ENCODE measurements at regions of chr13 and their contacts with region 1.

Region 1: GRCh38 chr13:40666045-40666904 is at the start of gene FOXO1:
- DNase-seq: peak; percentile 81 to 95 (median 90)
- ATAC-seq: peak; percentile 76
- H3K4me3 ChIP-seq: peak within 1 kb of the TSS; percentile 98
- H3K4me3 Mint-ChIP-seq: peak within 1 kb of the TSS; percentile 96
- H3K27ac ChIP-seq: peak within 1 kb of the TSS; percentile 56 to 91
- H3K27ac Mint-ChIP-seq: peak within 1 kb of the TSS; percentile 95
- H3K4me1 ChIP-seq: peaks cover 23% of the 10 kb centered on the region
- H3K4me1 Mint-ChIP-seq: peaks cover 37% of the 10 kb centered on the region
- H3K27me3 ChIP-seq: no peaks in the 10 kb centered on the region
- H3K27me3 Mint-ChIP-seq: no peaks in the 10 kb centered on the region
- CTCF ChIP-seq: no peak
- total RNA-seq, gene FOXO1: 93.1 to 101 TPM

Region 2: GRCh38 chr13:40206241-40207000 is 459.9 kb before region 1 on chr13:
- CTCF ChIA-PET with region 1: no interaction called
- POLR2A ChIA-PET with region 1: interaction called, 28 read pairs
- intact Hi-C with region 1: loop called in 1 of 2 experiments (anchors 10 kb)
- DNase-seq: peak in 12 of 14 experiments; percentile 35 to 80 (median 54)
- ATAC-seq: peak; percentile 92
- H3K4me3 ChIP-seq: peak overlapping the region; percentile 10
- H3K4me3 Mint-ChIP-seq: peak overlapping the region; percentile 79
- H3K27ac ChIP-seq: peak overlapping the region; percentile 68 to 77
- H3K27ac Mint-ChIP-seq: peak overlapping the region; percentile 97
- H3K4me1 ChIP-seq: peaks cover 56% of the 10 kb centered on the region
- H3K4me1 Mint-ChIP-seq: peaks cover 80% of the 10 kb centered on the region
- H3K27me3 ChIP-seq: no peaks in the 10 kb centered on the region
- H3K27me3 Mint-ChIP-seq: no peaks in the 10 kb centered on the region
- CTCF ChIP-seq: no peak

Region 3: DNA sequence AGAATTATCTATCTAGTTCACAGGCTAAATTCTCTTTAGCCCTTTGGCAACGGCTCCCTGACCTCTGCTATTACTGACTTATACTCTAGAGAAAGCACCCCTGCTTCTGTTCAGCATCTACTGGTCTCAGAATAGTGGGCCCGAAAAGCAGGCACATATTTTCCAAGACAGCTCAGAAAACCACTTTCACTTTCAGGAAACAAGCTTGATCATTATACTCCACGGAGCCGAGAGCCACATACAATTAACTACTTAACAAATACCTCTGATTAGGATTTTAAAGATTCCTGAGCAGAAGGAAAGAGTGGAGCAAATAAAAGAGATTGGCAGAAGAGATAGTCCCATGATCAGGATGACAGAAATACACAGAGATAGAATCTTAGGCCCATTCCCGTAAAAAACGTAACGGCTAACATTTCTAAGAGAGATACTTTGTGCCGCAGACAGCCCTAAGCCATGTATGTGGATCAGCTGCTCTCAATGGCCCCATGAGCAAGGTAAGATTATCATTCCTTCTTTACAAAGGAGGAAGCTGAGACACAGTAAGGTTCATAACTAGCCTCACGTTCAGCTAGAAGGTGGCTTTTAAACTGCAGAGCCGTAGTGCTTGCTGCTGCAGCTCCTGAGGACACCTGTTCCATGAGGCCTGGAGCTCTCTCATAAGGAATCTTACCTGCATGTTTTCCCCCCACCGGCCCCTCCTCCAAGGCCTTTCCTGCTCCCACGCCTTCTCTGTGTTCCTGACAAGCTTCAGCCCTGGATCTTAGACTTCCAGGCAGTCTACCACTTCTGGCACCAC is 227.1 kb before region 1 on chr13:
- CTCF ChIA-PET with region 1: no interaction called
- POLR2A ChIA-PET with region 1: interaction called, 5 read pairs
- intact Hi-C with region 1: loop called in 1 of 2 experiments (anchors 5 kb)
- DNase-seq: peak in 4 of 14 experiments; percentile 32 to 53 (median 42)
- ATAC-seq: peak; percentile 61
- H3K4me3 ChIP-seq: peak overlapping the region; percentile 20
- H3K4me3 Mint-ChIP-seq: peak overlapping the region; percentile 74
- H3K27ac ChIP-seq: no peak overlapping the region
- H3K27ac Mint-ChIP-seq: peak overlapping the region; percentile 75
- H3K4me1 ChIP-seq: peaks cover 38% of the 10 kb centered on the region
- H3K4me1 Mint-ChIP-seq: peaks cover 50% of the 10 kb centered on the region
- H3K27me3 ChIP-seq: no peaks in the 10 kb centered on the region
- H3K27me3 Mint-ChIP-seq: no peaks in the 10 kb centered on the region
- CTCF ChIP-seq: no peak

Region 4: DNA sequence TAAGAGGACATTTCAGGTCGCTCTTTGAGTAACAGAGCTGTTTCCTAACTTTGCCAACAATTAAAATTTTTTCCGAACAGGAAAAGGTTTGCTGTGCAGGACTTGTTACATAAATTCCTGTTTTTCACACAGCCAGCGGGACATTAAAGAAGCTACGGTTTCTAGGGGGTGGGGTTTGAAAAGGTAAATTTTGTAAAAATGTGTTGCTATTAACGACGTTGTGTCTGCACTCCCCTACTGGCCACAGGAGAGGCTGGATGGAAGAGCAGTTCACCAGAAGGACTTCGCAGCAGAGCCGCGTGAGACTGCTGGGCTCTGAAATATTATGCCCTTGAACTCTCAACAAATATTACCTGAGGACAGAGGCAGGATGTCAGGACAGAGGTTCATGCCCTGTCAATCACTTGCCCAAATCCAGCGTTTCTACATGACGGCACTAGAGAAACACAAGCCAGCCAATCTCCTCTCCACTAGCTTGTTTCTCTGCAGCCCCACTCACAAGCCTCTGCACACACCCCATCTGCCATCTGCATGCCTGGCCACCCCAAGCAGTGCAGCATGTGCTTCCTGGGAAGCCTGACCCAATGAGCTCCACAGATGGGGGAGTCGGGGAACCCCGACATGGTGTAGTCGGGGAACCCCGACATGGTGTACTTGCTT is 101.8 kb before region 1 on chr13:
- CTCF ChIA-PET with region 1: no interaction called
- POLR2A ChIA-PET with region 1: interaction called, 3 read pairs
- intact Hi-C with region 1: loop called in 1 of 2 experiments (anchors 5 kb)
- DNase-seq: peak in 3 of 14 experiments; percentile 22 to 63 (median 57)
- ATAC-seq: peak; percentile 21
- H3K4me3 ChIP-seq: no peak overlapping the region
- H3K4me3 Mint-ChIP-seq: peak overlapping the region; percentile 65
- H3K27ac ChIP-seq: peak overlapping the region in 1 of 2 donors; percentile 29
- H3K27ac Mint-ChIP-seq: peak overlapping the region; percentile 79
- H3K4me1 ChIP-seq: peaks cover 80% of the 10 kb centered on the region
- H3K4me1 Mint-ChIP-seq: peaks cover 93% of the 10 kb centered on the region
- H3K27me3 ChIP-seq: no peaks in the 10 kb centered on the region
- H3K27me3 Mint-ChIP-seq: no peaks in the 10 kb centered on the region
- CTCF ChIP-seq: no peak

Region 5: DNA sequence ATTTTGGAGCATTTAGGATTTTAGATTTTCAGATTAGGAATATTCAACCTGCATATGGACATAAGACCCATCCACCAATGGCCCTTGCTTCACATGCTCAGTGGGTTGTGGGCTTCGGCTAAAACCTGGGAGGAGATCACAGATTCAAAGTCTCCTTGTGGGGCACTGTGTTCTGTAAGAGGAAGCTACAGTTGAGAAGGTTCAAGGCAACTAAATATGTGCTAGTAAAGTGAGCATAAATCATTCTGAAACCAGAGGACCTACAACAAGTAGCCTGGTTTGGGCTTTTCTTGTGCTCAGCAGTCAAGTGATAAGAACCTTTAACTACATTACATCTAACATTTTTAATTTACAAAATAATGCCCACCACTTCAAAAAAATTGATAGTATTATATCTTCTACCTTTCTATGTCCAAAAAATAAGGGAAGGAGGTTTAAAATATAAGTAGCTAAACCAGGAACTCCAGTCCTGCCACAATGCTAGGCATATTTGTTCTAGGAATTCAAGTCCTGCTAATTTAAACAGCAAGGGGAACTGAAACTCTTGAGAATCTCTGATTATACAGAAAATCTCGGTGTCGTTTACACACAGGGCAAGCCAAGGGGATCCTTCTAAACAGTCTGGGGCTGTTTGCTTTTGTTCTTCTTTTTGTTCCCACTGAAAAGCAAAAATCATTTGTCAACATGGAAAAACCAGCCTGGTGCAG is 36.4 kb before region 1 on chr13:
- CTCF ChIA-PET with region 1: no interaction called
- POLR2A ChIA-PET with region 1: interaction called, 3 read pairs
- intact Hi-C with region 1: loop called in 1 of 2 experiments (anchors 5 kb)
- DNase-seq: no peak
- ATAC-seq: no peak
- H3K4me3 ChIP-seq: no peak overlapping the region
- H3K4me3 Mint-ChIP-seq: peak overlapping the region; percentile 31
- H3K27ac ChIP-seq: no peak overlapping the region
- H3K27ac Mint-ChIP-seq: peak overlapping the region; percentile 53
- H3K4me1 ChIP-seq: peaks cover 52% of the 10 kb centered on the region
- H3K4me1 Mint-ChIP-seq: peaks cover 87% of the 10 kb centered on the region
- H3K27me3 ChIP-seq: no peaks in the 10 kb centered on the region
- H3K27me3 Mint-ChIP-seq: no peaks in the 10 kb centered on the region
- CTCF ChIP-seq: no peak